PC-9 (cell line): ENCODE measurements at regions of chr4 and their contacts with region 1.

Region 1: GRCh38 chr4:47562297-47562696 is 77.2 kb downstream of the ATP10D start:
- DNase-seq: no peak
- H3K4me3 ChIP-seq: no peak overlapping the region
- H3K27ac ChIP-seq: no peak overlapping the region
- H3K4me1 ChIP-seq: peaks cover 36% of the 10 kb centered on the region
- H3K27me3 ChIP-seq: no peaks in the 10 kb centered on the region
- CTCF ChIP-seq: no peak

Region 2: DNA sequence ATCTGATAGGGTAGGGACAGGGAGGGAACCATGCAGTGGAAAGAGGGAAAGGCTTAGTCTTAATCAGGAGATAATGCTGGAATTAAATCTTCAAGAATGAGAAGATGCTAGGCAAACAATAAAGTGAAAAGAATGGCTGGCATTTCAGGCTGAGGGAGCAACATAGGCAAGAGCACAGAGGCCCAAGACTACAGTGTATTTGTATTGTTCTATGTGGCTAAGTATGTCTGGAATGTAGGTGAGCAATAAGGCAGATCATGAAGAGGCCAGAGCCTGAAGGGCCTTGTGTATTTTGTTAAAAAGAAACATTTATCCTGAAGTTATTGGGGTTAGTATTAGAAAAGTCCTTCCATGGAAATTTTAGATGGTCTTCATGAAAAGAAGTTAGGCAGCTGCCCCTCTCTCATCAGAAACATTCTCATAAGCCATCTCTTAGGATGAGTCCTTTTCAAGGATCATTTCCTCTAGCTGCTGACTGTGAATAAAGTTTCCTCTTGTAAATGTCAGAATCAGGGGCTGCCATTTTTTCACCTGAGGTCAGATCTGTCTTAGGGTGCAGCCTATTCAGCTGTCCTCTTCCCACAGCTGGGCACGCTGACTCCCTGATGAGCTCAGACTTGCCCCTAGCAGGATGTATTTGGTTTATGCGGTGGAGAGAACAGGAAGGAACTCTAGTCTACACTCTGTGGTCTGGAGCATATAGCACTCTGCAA is 30.9 kb before region 1 on chr4:
- CTCF ChIA-PET with region 1: no interaction called
- POLR2A ChIA-PET with region 1: interaction called, 10 read pairs
- intact Hi-C with region 1: loop called (anchors 2 kb)
- DNase-seq: peak; percentile 45 to 85
- H3K4me3 ChIP-seq: no peak overlapping the region
- H3K27ac ChIP-seq: peak overlapping the region; percentile 66
- H3K4me1 ChIP-seq: peaks cover 22% of the 10 kb centered on the region
- H3K27me3 ChIP-seq: no peaks in the 10 kb centered on the region
- CTCF ChIP-seq: no peak